ENCODE measurements at regions of chr6 and their contacts with region 1.

Region 1: DNA sequence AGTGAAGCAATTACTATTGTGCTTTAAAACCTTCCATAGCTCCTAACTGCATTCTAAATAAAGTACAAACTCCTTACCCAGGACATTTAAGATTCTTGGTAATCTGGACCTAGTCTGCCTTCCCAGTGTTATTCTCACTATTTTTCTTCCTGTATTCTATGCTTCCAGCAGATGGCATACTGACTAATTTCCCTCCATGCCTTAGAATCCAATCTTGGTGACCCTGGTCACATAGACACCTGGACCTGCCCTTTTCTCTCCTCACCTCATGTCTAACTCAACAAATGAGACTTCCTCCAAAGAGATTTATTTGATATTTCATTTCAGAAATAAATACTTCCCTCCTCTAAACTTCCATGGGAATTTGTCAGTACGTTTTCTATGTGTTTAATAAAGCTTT is 25.8 kb downstream of the ROS1 start:
- DNase-seq: no peak
- ATAC-seq: no peak

Region 2: GRCh38 chr6:116419069-116419786 is 980.7 kb before region 1 on chr6:
- intact Hi-C with region 1: loop called (anchors 5 kb)
- DNase-seq: no peak
- ATAC-seq: no peak

Measured in sciatic nerve (tissue), 2 donors.